MCF 10A (cell line): ENCODE measurements at regions of chr16 and their contacts with region 1.

Region 1: GRCh38 chr16:19696328-19696727 is 21.7 kb downstream of the KNOP1 start:
- DNase-seq: peak; percentile 87
- H3K4me3 Mint-ChIP-seq: peak overlapping the region; percentile 11
- H3K27ac Mint-ChIP-seq: peak overlapping the region; percentile 85
- H3K4me1 Mint-ChIP-seq: peaks cover 24% of the 10 kb centered on the region
- H3K27me3 Mint-ChIP-seq: no peaks in the 10 kb centered on the region
- CTCF ChIP-seq: no peak

Region 2: GRCh38 chr16:19344224-19344801 is 352.0 kb before region 1 on chr16:
- CTCF ChIA-PET with region 1: no interaction called
- POLR2A ChIA-PET with region 1: no interaction called
- intact Hi-C with region 1: loop called (anchors 5 kb)
- DNase-seq: no peak
- H3K4me3 Mint-ChIP-seq: no peak overlapping the region
- H3K27ac Mint-ChIP-seq: no peak overlapping the region
- H3K4me1 Mint-ChIP-seq: no peaks in the 10 kb centered on the region
- H3K27me3 Mint-ChIP-seq: peaks cover 32% of the 10 kb centered on the region
- CTCF ChIP-seq: no peak

Region 3: DNA sequence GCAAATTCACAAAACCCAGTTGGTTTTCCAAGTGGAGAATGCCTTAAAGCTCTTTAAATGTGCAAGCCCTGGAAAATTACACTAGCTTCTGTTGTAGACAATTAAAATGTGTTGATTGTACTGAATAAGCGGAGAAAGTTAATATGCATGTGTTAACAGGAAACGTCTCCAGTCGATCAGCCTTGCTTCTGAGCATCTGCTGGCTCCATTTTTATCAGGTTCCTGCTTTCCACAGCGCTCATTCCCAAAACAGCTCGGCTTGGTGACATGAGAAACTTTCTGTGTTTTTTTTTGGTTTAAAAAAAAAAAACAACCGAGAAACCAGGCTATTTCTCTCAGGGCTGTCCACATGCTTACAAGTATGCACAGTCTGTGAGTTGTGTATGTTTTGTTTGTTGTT is 80.1 kb before region 1 on chr16:
- CTCF ChIA-PET with region 1: no interaction called
- POLR2A ChIA-PET with region 1: no interaction called
- intact Hi-C with region 1: no loop called
- DNase-seq: no peak
- H3K4me3 Mint-ChIP-seq: no peak overlapping the region
- H3K27ac Mint-ChIP-seq: no peak overlapping the region
- H3K4me1 Mint-ChIP-seq: no peaks in the 10 kb centered on the region
- H3K27me3 Mint-ChIP-seq: no peaks in the 10 kb centered on the region
- CTCF ChIP-seq: no peak

Region 4: DNA sequence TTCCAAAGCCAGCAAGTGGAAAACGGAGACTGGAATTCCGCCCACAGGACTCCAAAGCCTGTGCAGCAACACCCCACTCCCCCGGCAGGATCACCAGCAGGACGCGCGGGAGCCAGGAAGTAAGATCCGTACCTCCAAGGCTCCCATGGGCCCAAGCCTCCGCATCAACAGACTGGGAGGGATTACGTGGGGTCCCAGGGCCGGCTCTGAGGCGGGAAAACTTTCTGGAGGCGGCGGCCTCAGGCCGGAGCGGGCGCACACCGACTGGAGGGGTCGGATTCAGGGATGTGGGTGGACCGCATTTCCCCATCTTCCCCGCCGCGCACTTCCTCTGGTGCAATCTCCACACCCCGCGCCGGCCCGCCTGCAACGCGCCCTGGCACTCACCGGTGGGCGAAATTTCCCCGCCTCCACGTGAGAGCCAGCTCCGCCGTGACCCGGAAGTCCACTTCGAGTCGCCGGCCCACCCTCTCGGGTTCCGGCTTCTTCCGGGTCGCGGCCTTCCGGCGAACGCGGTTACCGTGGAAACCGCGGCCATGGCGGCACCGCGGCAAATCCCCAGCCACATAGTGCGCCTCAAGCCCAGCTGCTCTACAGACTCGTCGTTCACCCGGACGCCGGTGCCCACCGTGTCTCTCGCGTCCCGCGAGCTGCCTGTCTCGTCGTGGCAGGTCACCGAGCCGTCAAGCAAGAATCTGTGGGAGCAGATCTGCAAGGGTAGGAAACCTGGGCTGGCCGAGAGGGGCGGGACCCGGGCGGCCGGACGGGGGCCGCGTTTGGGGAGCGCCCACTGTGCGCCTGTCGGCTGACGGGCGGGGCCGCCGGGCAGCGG is 21.7 kb after region 1 on chr16 and contains the starts of genes IQCK and KNOP1:
- CTCF ChIA-PET with region 1: interaction called, 5 read pairs
- POLR2A ChIA-PET with region 1: interaction called, 11 read pairs
- intact Hi-C with region 1: no loop called
- DNase-seq: peak; percentile 80
- H3K4me3 Mint-ChIP-seq: peak within 1 kb of the TSS; percentile 87
- H3K27ac Mint-ChIP-seq: peak within 1 kb of the TSS; percentile 65
- H3K4me1 Mint-ChIP-seq: peaks cover 27% of the 10 kb centered on the region
- H3K27me3 Mint-ChIP-seq: no peaks in the 10 kb centered on the region
- CTCF ChIP-seq: no peak
- total RNA-seq, gene IQCK: 5.9 and 8.4 TPM in 2 replicates
- total RNA-seq, gene KNOP1: 22.3 and 24.5 TPM in 2 replicates